ENCODE measurements at regions of chr1 and their contacts with region 1.

Region 1: DNA sequence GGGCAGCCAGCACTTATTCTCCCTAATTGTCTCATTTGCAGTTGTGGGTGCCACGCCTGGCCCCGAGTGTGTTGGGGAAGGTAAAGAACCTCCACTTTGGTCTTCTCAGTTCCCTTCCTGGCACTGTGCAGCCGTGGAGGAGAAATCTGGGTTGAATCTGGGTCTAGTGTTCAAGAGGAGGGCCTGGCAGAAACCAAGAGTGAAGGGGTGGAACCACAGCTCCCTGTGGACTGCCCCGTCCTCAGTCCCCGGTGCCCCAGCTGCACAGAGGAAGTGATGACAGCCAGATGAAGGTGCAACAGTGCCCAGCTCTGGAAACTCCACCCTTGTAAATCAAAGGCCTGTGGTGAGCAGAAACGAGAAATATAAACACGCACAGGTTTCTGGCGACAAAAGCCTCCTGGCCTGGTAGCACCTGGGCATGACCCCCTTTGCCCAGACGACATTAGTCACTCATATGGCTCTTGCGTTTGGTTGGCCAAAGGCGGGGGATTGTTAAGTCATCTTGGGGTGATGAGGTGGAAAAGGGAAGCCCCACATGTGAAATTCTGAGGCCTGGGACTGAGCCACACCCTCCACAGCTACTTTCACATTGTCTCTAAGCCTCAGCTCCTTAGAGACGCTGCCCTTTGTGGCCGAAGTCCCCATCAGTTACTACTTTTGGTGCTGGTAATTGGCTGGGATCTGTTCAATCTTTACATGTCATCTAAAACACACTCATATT is 4.2 kb upstream of the ECE1 start:
- DNase-seq: peak; percentile 89
- H3K4me3 Mint-ChIP-seq: peak overlapping the region; percentile 79
- H3K27ac Mint-ChIP-seq: peak overlapping the region; percentile 98
- H3K4me1 Mint-ChIP-seq: peaks cover 85% of the 10 kb centered on the region
- H3K27me3 Mint-ChIP-seq: no peaks in the 10 kb centered on the region

Region 2: DNA sequence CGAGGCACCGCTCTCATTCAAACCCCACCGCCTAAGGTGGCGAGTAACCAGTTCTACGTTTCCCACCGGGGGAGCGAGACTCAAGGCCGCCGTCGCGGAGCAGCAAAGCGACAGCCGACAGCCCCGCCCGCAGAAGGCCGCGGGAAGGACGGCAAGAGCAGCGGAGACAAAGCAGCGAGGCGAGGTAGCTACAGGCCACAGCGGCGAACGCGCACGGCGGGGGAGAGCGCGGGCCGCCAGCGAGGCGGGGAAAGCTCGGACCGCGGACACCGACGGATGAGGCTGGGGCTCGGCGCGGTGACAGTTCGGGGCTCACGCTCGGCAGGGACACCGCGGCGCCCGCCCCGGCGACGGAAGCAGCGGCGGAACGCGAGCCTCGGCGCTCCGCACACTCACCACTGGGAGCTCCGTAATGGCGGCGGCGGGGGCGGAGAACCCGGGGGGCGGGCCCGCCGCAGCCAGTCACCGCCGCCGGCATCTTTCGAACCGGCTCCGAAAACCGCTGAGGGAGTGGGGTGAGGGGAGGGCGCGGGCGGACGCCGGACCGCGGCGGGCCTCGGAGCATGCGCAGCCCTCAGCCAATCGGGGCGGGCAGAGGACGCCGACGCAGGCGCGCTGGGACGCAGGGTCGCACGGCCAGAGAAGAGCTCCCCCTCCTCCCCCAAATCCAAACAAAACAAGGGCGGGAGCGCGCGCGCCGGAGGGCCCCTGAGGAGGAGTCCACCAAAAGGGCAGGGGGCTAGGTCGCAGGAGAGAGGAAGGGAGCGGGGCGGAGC is 508.0 kb before region 1 on chr1:
- CTCF ChIA-PET with region 1: no interaction called
- POLR2A ChIA-PET with region 1: interaction called, 14 read pairs
- DNase-seq: peak; percentile 96
- H3K4me3 Mint-ChIP-seq: peak overlapping the region; percentile 97
- H3K27ac Mint-ChIP-seq: peak overlapping the region; percentile 98
- H3K4me1 Mint-ChIP-seq: peaks cover 31% of the 10 kb centered on the region
- H3K27me3 Mint-ChIP-seq: no peaks in the 10 kb centered on the region

Region 3: GRCh38 chr1:21280011-21280471 is 14.4 kb before region 1 on chr1:
- CTCF ChIA-PET with region 1: interaction called, 7 read pairs
- POLR2A ChIA-PET with region 1: interaction called, 140 read pairs
- DNase-seq: peak; percentile 47
- H3K4me3 Mint-ChIP-seq: peak overlapping the region; percentile 71
- H3K27ac Mint-ChIP-seq: peak overlapping the region; percentile 93
- H3K4me1 Mint-ChIP-seq: peaks cover 58% of the 10 kb centered on the region
- H3K27me3 Mint-ChIP-seq: no peaks in the 10 kb centered on the region

Region 4: GRCh38 chr1:21324368-21325141 is 30.1 kb after region 1 on chr1:
- CTCF ChIA-PET with region 1: interaction called, 3 read pairs
- POLR2A ChIA-PET with region 1: interaction called, 76 read pairs
- DNase-seq: peak; percentile 63
- H3K4me3 Mint-ChIP-seq: peak overlapping the region; percentile 40
- H3K27ac Mint-ChIP-seq: peak overlapping the region; percentile 72
- H3K4me1 Mint-ChIP-seq: peaks cover 67% of the 10 kb centered on the region
- H3K27me3 Mint-ChIP-seq: no peaks in the 10 kb centered on the region

Region 5: DNA sequence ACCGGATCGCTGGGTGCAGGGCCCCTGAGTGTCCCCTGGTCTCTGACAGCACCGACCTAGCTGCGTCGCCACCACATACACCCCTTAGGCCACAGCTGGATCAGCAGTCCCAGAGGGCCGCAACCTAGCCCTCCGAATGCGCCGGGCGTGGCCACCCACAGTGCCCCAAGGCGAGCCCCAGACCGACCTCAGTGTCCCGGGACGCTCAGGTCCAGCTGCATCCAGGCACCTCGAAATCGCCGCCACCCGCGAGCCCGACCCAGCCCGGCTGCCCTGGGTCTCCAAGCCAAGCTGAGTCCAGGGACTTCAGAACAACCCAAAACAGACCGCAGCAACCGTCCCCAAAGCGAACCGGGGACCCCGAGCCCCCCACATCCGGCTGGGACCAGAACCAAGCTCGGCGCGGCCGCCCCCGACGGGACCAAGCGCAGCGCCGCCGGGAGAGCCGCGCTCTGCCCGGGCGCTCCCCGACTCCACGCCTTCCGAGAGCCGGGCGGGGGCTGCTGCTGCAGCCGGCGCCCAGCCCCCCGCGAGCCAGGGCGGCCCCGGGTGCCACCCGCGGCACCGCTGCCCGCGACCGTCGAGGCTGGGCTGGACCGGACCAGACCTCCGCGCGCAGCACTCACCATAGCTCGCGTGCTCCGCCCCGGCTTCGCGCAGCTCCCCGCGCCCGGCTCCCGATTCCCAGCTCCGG is 50.5 kb after region 1 on chr1:
- CTCF ChIA-PET with region 1: interaction called, 15 read pairs
- POLR2A ChIA-PET with region 1: interaction called, 132 read pairs
- DNase-seq: peak; percentile 36
- H3K4me3 Mint-ChIP-seq: peak overlapping the region; percentile 83
- H3K27ac Mint-ChIP-seq: peak overlapping the region; percentile 88
- H3K4me1 Mint-ChIP-seq: peaks cover 41% of the 10 kb centered on the region
- H3K27me3 Mint-ChIP-seq: no peaks in the 10 kb centered on the region

Measured in activated CD4-positive, alpha-beta memory T cell treated with anti-CD3 and anti-CD28 coated beads, Interleukin-2, amount 10 ng/mL, durations not matched to agents 7 days and 5 days (primary cell).